ENCODE measurements at regions of chr3 and their contacts with region 1.

Region 1: GRCh38 chr3:112327371-112327951 is 5.5 kb upstream of the CD200 start:
- DNase-seq: peak; percentile 55
- ATAC-seq: peak; percentile 99
- H3K4me3 ChIP-seq: no peak overlapping the region
- H3K27ac ChIP-seq: no peak overlapping the region
- H3K4me1 ChIP-seq: no peaks in the 10 kb centered on the region
- H3K27me3 ChIP-seq: no peaks in the 10 kb centered on the region
- CTCF ChIP-seq: peak; percentile 66 to 76 (median 67)
- POLR2A ChIP-seq: no peak
- RAD21 ChIP-seq: peak; percentile 78

Region 2: DNA sequence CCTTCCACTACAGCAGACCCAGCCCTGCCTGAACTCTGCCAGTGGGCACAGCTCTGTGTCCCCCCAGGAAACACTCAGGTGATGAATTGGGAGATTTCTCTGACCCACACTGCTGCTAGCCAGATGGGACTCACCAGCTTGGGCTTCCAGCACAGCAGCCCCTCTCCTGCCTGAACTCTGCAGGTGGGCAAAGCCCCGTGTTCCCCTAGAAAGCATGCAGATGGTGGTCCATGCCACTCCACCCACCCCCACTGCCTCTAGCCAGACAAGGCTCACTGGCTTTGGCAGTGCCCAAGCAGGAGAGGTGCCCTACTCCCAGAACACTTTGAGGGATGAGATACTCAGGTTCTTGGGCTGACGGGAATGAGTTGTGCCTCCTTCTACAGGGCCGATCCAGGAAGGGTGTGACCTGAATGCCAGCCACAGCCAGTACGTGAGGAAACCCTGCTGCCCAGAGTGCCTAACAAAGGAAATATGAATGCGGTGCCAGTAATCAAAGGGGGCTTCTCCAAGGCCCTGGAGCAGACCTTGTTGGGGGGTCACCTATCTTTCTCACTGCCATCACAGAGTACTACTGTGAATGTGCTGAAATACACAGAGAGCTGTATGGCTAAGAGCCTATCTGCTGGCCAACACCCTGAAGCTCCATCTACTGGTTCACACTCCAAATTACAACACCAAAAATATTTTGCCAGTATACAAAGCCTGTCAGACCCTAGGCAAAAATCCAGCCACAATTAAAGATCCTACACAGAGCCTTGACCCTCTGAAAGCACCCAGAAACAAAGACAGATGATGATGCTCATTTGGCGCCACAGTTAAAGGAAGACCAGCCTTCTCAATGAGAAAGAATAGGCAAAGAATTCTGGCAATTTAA is 109.9 kb after region 1 on chr3:
- CTCF ChIA-PET with region 1: interaction called, 5 read pairs
- POLR2A ChIA-PET with region 1: no interaction called
- RAD21 ChIA-PET with region 1: interaction called in 1 of 2 experiments, 3 read pairs
- intact Hi-C with region 1: loop called (anchors 1 kb)
- DNase-seq: peak; percentile 19
- ATAC-seq: peak; percentile 98
- H3K4me3 ChIP-seq: no peak overlapping the region
- H3K27ac ChIP-seq: no peak overlapping the region
- H3K4me1 ChIP-seq: no peaks in the 10 kb centered on the region
- H3K27me3 ChIP-seq: no peaks in the 10 kb centered on the region
- CTCF ChIP-seq: peak; percentile 56 to 62 (median 61); a peak in 5 of 6 replicates
- POLR2A ChIP-seq: no peak
- RAD21 ChIP-seq: peak; percentile 71

Region 3: GRCh38 chr3:112519424-112520001 is 192.1 kb after region 1 on chr3:
- CTCF ChIA-PET with region 1: no interaction called
- POLR2A ChIA-PET with region 1: no interaction called
- RAD21 ChIA-PET with region 1: no interaction called
- intact Hi-C with region 1: loop called (anchors 1 kb)
- DNase-seq: peak; percentile 51
- ATAC-seq: peak; percentile 90
- H3K4me3 ChIP-seq: no peak overlapping the region
- H3K27ac ChIP-seq: no peak overlapping the region
- H3K4me1 ChIP-seq: no peaks in the 10 kb centered on the region
- H3K27me3 ChIP-seq: no peaks in the 10 kb centered on the region
- CTCF ChIP-seq: peak; percentile 68 to 76 (median 69)
- POLR2A ChIP-seq: no peak
- RAD21 ChIP-seq: peak; percentile 83

Region 4: GRCh38 chr3:112531358-112531781 is 203.9 kb after region 1 on chr3:
- CTCF ChIA-PET with region 1: no interaction called
- POLR2A ChIA-PET with region 1: no interaction called
- RAD21 ChIA-PET with region 1: no interaction called
- intact Hi-C with region 1: loop called (anchors 1 kb)
- DNase-seq: peak; percentile 6
- ATAC-seq: no peak
- H3K4me3 ChIP-seq: no peak overlapping the region
- H3K27ac ChIP-seq: no peak overlapping the region
- H3K4me1 ChIP-seq: no peaks in the 10 kb centered on the region
- H3K27me3 ChIP-seq: no peaks in the 10 kb centered on the region
- CTCF ChIP-seq: peak in 2 of 3 experiments; percentile 31 to 73; a peak in 3 of 6 replicates
- POLR2A ChIP-seq: no peak
- RAD21 ChIP-seq: peak; percentile 35; the same call in 1 of the 2 replicates

Region 5: GRCh38 chr3:113019182-113020137 is 692.0 kb after region 1 on chr3:
- CTCF ChIA-PET with region 1: no interaction called
- POLR2A ChIA-PET with region 1: no interaction called
- RAD21 ChIA-PET with region 1: no interaction called
- intact Hi-C with region 1: no loop called
- DNase-seq: peak; percentile 82
- ATAC-seq: peak; percentile 98
- H3K4me3 ChIP-seq: peak overlapping the region; percentile 78 to 85
- H3K27ac ChIP-seq: peak overlapping the region; percentile 85
- H3K4me1 ChIP-seq: peaks cover 9 to 17% of the 10 kb centered on the region in 2 experiments; a peak in 3 of 4 replicates
- H3K27me3 ChIP-seq: no peaks in the 10 kb centered on the region
- CTCF ChIP-seq: no peak
- POLR2A ChIP-seq: peak; percentile 74
- RAD21 ChIP-seq: no peak

Region 6: GRCh38 chr3:113132571-113132996 is 805.1 kb after region 1 on chr3:
- CTCF ChIA-PET with region 1: no interaction called
- POLR2A ChIA-PET with region 1: no interaction called
- RAD21 ChIA-PET with region 1: no interaction called
- intact Hi-C with region 1: no loop called
- DNase-seq: no peak
- ATAC-seq: no peak
- H3K4me3 ChIP-seq: no peak overlapping the region
- H3K27ac ChIP-seq: no peak overlapping the region
- H3K4me1 ChIP-seq: peaks cover 0 to 5% of the 10 kb centered on the region in 2 experiments; a peak in 1 of 4 replicates
- H3K27me3 ChIP-seq: no peaks in the 10 kb centered on the region
- CTCF ChIP-seq: no peak
- POLR2A ChIP-seq: no peak
- RAD21 ChIP-seq: no peak